ENCODE measurements at regions of chr13 and their contacts with region 1.

Region 1: GRCh38 chr13:107124129-107124718 is 556.3 kb upstream of the ARGLU1 start:
- DNase-seq: peak in 1 of 2 experiments; percentile 62
- H3K4me3 ChIP-seq: no peak overlapping the region
- H3K4me3 Mint-ChIP-seq: no peak overlapping the region
- H3K27ac Mint-ChIP-seq: no peak overlapping the region
- H3K4me1 ChIP-seq: peaks cover 60% of the 10 kb centered on the region
- H3K4me1 Mint-ChIP-seq: peaks cover 31% of the 10 kb centered on the region
- H3K27me3 ChIP-seq: no peaks in the 10 kb centered on the region
- H3K27me3 Mint-ChIP-seq: no peaks in the 10 kb centered on the region
- CTCF ChIP-seq: peak; percentile 53 to 64

Region 2: GRCh38 chr13:106083620-106084350 is 1040.4 kb before region 1 on chr13:
- CTCF ChIA-PET with region 1: no interaction called
- POLR2A ChIA-PET with region 1: no interaction called
- intact Hi-C with region 1: loop called (anchors 5 kb)
- DNase-seq: peak; percentile 67 to 69
- H3K4me3 ChIP-seq: no peak overlapping the region
- H3K4me3 Mint-ChIP-seq: no peak overlapping the region
- H3K27ac Mint-ChIP-seq: peak overlapping the region; percentile 25
- H3K4me1 ChIP-seq: peaks cover 24% of the 10 kb centered on the region
- H3K4me1 Mint-ChIP-seq: peaks cover 15% of the 10 kb centered on the region
- H3K27me3 ChIP-seq: no peaks in the 10 kb centered on the region
- H3K27me3 Mint-ChIP-seq: no peaks in the 10 kb centered on the region
- CTCF ChIP-seq: peak; percentile 68 to 71

Region 3: GRCh38 chr13:106567474-106568298 is 556.5 kb before region 1 on chr13 and contains the start of gene ARGLU1:
- CTCF ChIA-PET with region 1: interaction called, 3 read pairs
- POLR2A ChIA-PET with region 1: no interaction called
- intact Hi-C with region 1: loop called (anchors 5 kb)
- DNase-seq: peak; percentile 93 to 97
- H3K4me3 ChIP-seq: peak within 1 kb of the TSS; percentile 93
- H3K4me3 Mint-ChIP-seq: peak within 1 kb of the TSS; percentile 87
- H3K27ac Mint-ChIP-seq: peak within 1 kb of the TSS; percentile 95
- H3K4me1 ChIP-seq: peaks cover 41% of the 10 kb centered on the region
- H3K4me1 Mint-ChIP-seq: peaks cover 16% of the 10 kb centered on the region
- H3K27me3 ChIP-seq: no peaks in the 10 kb centered on the region
- H3K27me3 Mint-ChIP-seq: no peaks in the 10 kb centered on the region
- CTCF ChIP-seq: no peak
- total RNA-seq, gene ARGLU1: 127 and 137 TPM in 2 replicates

Region 4: GRCh38 chr13:106680796-106681472 is 443.3 kb before region 1 on chr13:
- CTCF ChIA-PET with region 1: no interaction called
- POLR2A ChIA-PET with region 1: no interaction called
- intact Hi-C with region 1: loop called (anchors 5 kb)
- DNase-seq: no peak
- H3K4me3 ChIP-seq: no peak overlapping the region
- H3K4me3 Mint-ChIP-seq: no peak overlapping the region
- H3K27ac Mint-ChIP-seq: no peak overlapping the region
- H3K4me1 ChIP-seq: peaks cover 43% of the 10 kb centered on the region
- H3K4me1 Mint-ChIP-seq: peaks cover 50% of the 10 kb centered on the region
- H3K27me3 ChIP-seq: no peaks in the 10 kb centered on the region
- H3K27me3 Mint-ChIP-seq: no peaks in the 10 kb centered on the region
- CTCF ChIP-seq: no peak

Region 5: GRCh38 chr13:106917673-106918556 is 206.3 kb before region 1 on chr13:
- CTCF ChIA-PET with region 1: no interaction called
- POLR2A ChIA-PET with region 1: no interaction called
- intact Hi-C with region 1: loop called (anchors 1 kb)
- DNase-seq: peak; percentile 77 to 91
- H3K4me3 ChIP-seq: peak overlapping the region; percentile 44
- H3K4me3 Mint-ChIP-seq: peak overlapping the region; percentile 74
- H3K27ac Mint-ChIP-seq: peak overlapping the region; percentile 92
- H3K4me1 ChIP-seq: peaks cover 25% of the 10 kb centered on the region
- H3K4me1 Mint-ChIP-seq: peaks cover 34% of the 10 kb centered on the region
- H3K27me3 ChIP-seq: no peaks in the 10 kb centered on the region
- H3K27me3 Mint-ChIP-seq: no peaks in the 10 kb centered on the region
- CTCF ChIP-seq: peak; percentile 96

Region 6: GRCh38 chr13:106996867-106997618 is 127.2 kb before region 1 on chr13:
- CTCF ChIA-PET with region 1: no interaction called
- POLR2A ChIA-PET with region 1: no interaction called
- intact Hi-C with region 1: loop called (anchors 1 kb)
- DNase-seq: peak; percentile 63 to 76
- H3K4me3 ChIP-seq: no peak overlapping the region
- H3K4me3 Mint-ChIP-seq: peak overlapping the region; percentile 32
- H3K27ac Mint-ChIP-seq: peak overlapping the region; percentile 50
- H3K4me1 ChIP-seq: peaks cover 21% of the 10 kb centered on the region
- H3K4me1 Mint-ChIP-seq: peaks cover 27% of the 10 kb centered on the region
- H3K27me3 ChIP-seq: no peaks in the 10 kb centered on the region
- H3K27me3 Mint-ChIP-seq: no peaks in the 10 kb centered on the region
- CTCF ChIP-seq: no peak

Region 7: GRCh38 chr13:107018285-107018684 is 105.9 kb before region 1 on chr13:
- CTCF ChIA-PET with region 1: no interaction called
- POLR2A ChIA-PET with region 1: no interaction called
- intact Hi-C with region 1: loop called (anchors 1 kb)
- DNase-seq: peak in 1 of 2 experiments; percentile 33
- H3K4me3 ChIP-seq: no peak overlapping the region
- H3K4me3 Mint-ChIP-seq: peak overlapping the region; percentile 17
- H3K27ac Mint-ChIP-seq: peak overlapping the region; percentile 21
- H3K4me1 ChIP-seq: peaks cover 32% of the 10 kb centered on the region
- H3K4me1 Mint-ChIP-seq: peaks cover 21% of the 10 kb centered on the region
- H3K27me3 ChIP-seq: no peaks in the 10 kb centered on the region
- H3K27me3 Mint-ChIP-seq: no peaks in the 10 kb centered on the region
- CTCF ChIP-seq: no peak

Region 8: GRCh38 chr13:107395927-107396662 is 271.9 kb after region 1 on chr13:
- CTCF ChIA-PET with region 1: no interaction called
- POLR2A ChIA-PET with region 1: no interaction called
- intact Hi-C with region 1: no loop called
- DNase-seq: no peak
- H3K4me3 ChIP-seq: no peak overlapping the region
- H3K4me3 Mint-ChIP-seq: no peak overlapping the region
- H3K27ac Mint-ChIP-seq: no peak overlapping the region
- H3K4me1 ChIP-seq: no peaks in the 10 kb centered on the region
- H3K4me1 Mint-ChIP-seq: no peaks in the 10 kb centered on the region
- H3K27me3 ChIP-seq: no peaks in the 10 kb centered on the region
- H3K27me3 Mint-ChIP-seq: peaks cover 13% of the 10 kb centered on the region
- CTCF ChIP-seq: no peak

Measured in Caco-2 (cell line).